ENCODE measurements at regions of chr4 and their contacts with region 1.

Region 1: DNA sequence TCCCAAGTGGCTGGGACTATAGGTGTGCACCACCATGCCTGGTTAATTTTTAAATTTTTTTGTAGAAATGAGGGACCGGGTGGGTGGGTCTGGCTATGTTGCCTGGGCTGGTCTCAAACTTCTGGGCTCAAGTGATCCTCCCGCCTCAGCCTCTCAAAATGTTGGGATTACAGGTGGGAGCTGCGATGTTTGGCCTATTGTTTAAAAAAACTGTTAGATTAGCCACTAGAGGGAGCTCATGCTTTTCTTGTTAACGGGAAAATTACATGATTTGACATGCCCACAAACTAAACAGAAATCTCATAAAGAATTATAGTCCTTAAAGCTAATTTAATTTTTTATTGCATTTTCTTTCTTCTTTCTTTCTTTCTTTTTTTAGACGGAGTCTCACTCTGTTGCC is 5.0 kb upstream of the SDAD1 start:
- DNase-seq: no peak
- H3K4me3 ChIP-seq: no peak overlapping the region
- H3K27ac ChIP-seq: no peak overlapping the region
- H3K4me1 ChIP-seq: no peaks in the 10 kb centered on the region
- H3K27me3 ChIP-seq: no peaks in the 10 kb centered on the region
- CTCF ChIP-seq: peak; percentile 26 to 63 (median 42)
- POLR2A ChIP-seq: no peak

Region 2: GRCh38 chr4:75821966-75822365 is 173.8 kb before region 1 on chr4:
- intact Hi-C with region 1: no loop called
- DNase-seq: no peak
- H3K4me3 ChIP-seq: no peak overlapping the region
- H3K27ac ChIP-seq: no peak overlapping the region
- H3K4me1 ChIP-seq: no peaks in the 10 kb centered on the region
- H3K27me3 ChIP-seq: no peaks in the 10 kb centered on the region
- CTCF ChIP-seq: no peak
- POLR2A ChIP-seq: no peak

Region 3: GRCh38 chr4:76067652-76068286 is 72.0 kb after region 1 on chr4:
- intact Hi-C with region 1: loop called (anchors 5 kb)
- DNase-seq: peak; percentile 84
- H3K4me3 ChIP-seq: no peak overlapping the region
- H3K27ac ChIP-seq: no peak overlapping the region
- H3K4me1 ChIP-seq: no peaks in the 10 kb centered on the region
- H3K27me3 ChIP-seq: no peaks in the 10 kb centered on the region
- CTCF ChIP-seq: peak; percentile 60 to 75 (median 72)
- POLR2A ChIP-seq: no peak